Naive thymus-derived CD4-positive, alpha-beta T cell (primary cell): ENCODE measurements at regions of chr13 and their contacts with region 1.

Region 1: DNA sequence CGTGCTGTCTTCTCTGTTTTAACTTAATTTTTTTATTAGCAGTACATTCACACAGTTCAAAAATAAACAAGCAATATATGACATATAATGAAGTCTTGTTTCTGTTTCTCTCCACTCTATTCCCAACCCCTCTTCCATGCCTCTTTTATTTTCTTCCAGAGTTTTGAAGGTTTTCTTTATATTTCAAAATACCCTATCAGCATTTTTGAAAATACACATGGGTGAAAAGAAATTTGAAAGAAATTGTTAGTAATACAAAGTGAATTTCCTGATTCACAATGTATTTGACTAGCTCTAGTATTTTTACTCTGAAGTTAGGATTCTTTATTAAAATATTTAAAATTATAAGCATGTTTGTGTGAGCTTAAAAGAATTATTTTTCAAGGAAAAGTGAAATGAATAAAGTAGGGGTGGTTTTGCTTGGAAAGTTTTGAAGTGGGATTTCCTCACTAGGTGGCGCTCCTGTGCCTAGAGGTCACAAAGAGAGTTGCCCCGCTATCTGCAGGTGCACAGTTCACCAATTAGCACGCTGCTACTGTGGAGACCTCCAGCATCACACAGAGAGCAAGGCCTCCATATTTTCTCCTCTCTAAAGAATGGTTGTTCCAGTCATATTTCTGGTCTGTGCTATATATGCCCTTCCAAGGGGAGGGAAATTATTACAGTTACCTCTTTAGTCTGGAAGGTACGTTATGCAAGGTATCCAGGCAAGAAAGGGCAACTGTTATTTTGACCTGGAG is 37.6 kb downstream of the SOX21 start:
- DNase-seq: peak in 7 of 9 donors; percentile 12 to 49 (median 34)
- ATAC-seq: peak; percentile 55
- H3K4me3 ChIP-seq: no peak overlapping the region
- H3K4me3 Mint-ChIP-seq: no peak overlapping the region
- H3K27ac ChIP-seq: no peak overlapping the region
- H3K27ac Mint-ChIP-seq: no peak overlapping the region
- H3K4me1 ChIP-seq: no peaks in the 10 kb centered on the region
- H3K4me1 Mint-ChIP-seq: no peaks in the 10 kb centered on the region
- H3K27me3 ChIP-seq: no peaks in the 10 kb centered on the region
- H3K27me3 Mint-ChIP-seq: peaks cover 12 to 31% (median 20%) of the 10 kb centered on the region in 5 donors

Region 2: GRCh38 chr13:94558716-94559115 is 116.1 kb before region 1 on chr13:
- CTCF ChIA-PET with region 1: no interaction called
- POLR2A ChIA-PET with region 1: no interaction called
- intact Hi-C with region 1: no loop called
- DNase-seq: peak in 7 of 9 donors; percentile 20 to 65 (median 44)
- ATAC-seq: peak; percentile 59
- H3K4me3 ChIP-seq: peak overlapping the region; percentile 3
- H3K4me3 Mint-ChIP-seq: peak overlapping the region in 9 of 10 donors; percentile 38 to 82 (median 71)
- H3K27ac ChIP-seq: peak overlapping the region; percentile 22
- H3K27ac Mint-ChIP-seq: peak overlapping the region; percentile 80 to 91 (median 86)
- H3K4me1 ChIP-seq: peaks cover 0 to 14% of the 10 kb centered on the region in 2 donors
- H3K4me1 Mint-ChIP-seq: peaks cover 4 to 47% (median 36%) of the 10 kb centered on the region in 7 donors
- H3K27me3 ChIP-seq: no peaks in the 10 kb centered on the region
- H3K27me3 Mint-ChIP-seq: no peaks in the 10 kb centered on the region

Region 3: DNA sequence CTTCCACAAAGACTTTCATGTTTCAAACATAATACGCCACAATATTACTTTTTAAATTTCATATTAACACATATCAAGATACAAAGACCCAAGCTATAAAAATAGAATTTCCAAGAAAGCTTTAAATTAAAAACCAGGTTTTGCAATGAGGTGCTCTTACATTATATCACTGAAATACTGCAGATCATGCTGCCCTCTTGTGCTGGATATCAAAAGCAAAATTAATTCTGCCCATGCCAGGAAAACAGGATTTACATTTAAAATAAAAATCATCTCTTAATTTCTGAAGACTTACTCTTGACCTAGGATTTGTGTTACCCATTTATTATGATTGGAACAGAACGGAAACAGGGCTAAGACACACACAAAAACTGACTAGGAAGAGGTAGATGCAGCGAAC is 481.4 kb after region 1 on chr13:
- CTCF ChIA-PET with region 1: no interaction called
- POLR2A ChIA-PET with region 1: no interaction called
- intact Hi-C with region 1: loop called in 1 of 2 experiments (anchors 2 kb)
- DNase-seq: no peak
- ATAC-seq: no peak
- H3K4me3 ChIP-seq: no peak overlapping the region
- H3K4me3 Mint-ChIP-seq: no peak overlapping the region
- H3K27ac ChIP-seq: no peak overlapping the region
- H3K27ac Mint-ChIP-seq: peak overlapping the region in 3 of 9 donors; percentile 42 to 76 (median 60)
- H3K4me1 ChIP-seq: no peaks in the 10 kb centered on the region
- H3K4me1 Mint-ChIP-seq: peaks cover 0 to 6% (median 3%) of the 10 kb centered on the region in 7 donors
- H3K27me3 ChIP-seq: no peaks in the 10 kb centered on the region
- H3K27me3 Mint-ChIP-seq: no peaks in the 10 kb centered on the region

Region 4: GRCh38 chr13:95191821-95192563 is 517.2 kb after region 1 on chr13:
- CTCF ChIA-PET with region 1: no interaction called
- POLR2A ChIA-PET with region 1: no interaction called
- intact Hi-C with region 1: loop called in 1 of 2 experiments (anchors 1 kb)
- DNase-seq: peak in 8 of 9 donors; percentile 12 to 67 (median 36)
- ATAC-seq: peak; percentile 73
- H3K4me3 ChIP-seq: no peak overlapping the region
- H3K4me3 Mint-ChIP-seq: no peak overlapping the region
- H3K27ac ChIP-seq: no peak overlapping the region
- H3K27ac Mint-ChIP-seq: peak overlapping the region in 3 of 9 donors; percentile 20 to 69 (median 32)
- H3K4me1 ChIP-seq: peaks cover 0 to 2% of the 10 kb centered on the region in 2 donors
- H3K4me1 Mint-ChIP-seq: peaks cover 2 to 21% (median 19%) of the 10 kb centered on the region in 7 donors
- H3K27me3 ChIP-seq: no peaks in the 10 kb centered on the region
- H3K27me3 Mint-ChIP-seq: no peaks in the 10 kb centered on the region